ENCODE measurements at regions of chr20 and their contacts with region 1.

Region 1: DNA sequence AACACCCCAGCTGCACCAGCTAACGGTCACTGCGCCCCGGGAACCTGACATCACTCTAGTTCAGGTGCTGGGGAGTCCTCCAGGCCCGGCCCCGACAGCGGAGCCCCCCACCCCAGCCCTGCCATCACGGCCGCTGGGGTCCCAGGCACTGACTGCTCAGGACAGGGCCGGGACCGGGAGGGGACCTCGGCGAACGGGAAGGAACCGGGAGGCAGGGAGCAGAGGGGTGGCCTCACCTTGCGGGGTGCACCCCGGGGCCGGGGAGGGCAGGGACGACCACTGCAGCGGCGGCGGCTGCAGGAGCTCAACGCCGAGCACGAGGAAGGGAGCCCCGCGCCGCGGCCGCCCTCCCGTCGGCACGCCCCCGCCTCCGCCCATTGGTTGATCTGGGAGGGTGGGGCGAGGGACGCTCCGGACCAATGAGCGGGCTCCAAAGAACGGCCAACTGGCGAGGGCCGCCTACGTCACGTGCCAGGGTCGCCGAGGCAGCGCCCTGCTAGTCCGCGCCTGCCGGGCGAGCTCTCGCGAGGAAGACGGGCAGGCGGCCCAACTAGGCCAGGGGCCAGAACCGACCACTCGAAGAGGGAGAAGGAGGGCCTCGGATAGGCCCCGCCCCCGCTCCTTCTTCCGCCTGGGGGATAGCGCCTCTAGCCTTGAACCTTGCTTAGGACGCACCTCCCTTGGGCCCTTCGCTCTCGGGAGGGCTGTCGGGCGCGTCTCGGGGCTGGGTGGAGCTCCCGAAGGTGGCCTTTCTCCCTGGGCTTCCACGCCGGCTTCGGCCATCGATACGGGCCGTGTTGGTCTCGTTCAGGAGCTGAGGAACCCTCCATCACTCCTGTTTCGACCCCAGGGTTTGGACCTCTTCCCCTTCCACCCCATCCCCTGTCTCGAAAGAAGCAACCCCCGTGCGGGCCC is at the start of gene ADISSP:
- DNase-seq: peak; percentile 99
- ATAC-seq: peak; percentile 93
- H3K4me3 Mint-ChIP-seq: peak within 1 kb of the TSS; percentile 81
- H3K27ac Mint-ChIP-seq: peak within 1 kb of the TSS; percentile 70
- H3K4me1 Mint-ChIP-seq: peaks cover 25% of the 10 kb centered on the region
- H3K27me3 Mint-ChIP-seq: no peaks in the 10 kb centered on the region
- total RNA-seq, gene ADISSP: 46.5 to 57.3 TPM

Region 2: GRCh38 chr20:3156811-3157619 is 610.7 kb before region 1 on chr20:
- CTCF ChIA-PET with region 1: no interaction called
- POLR2A ChIA-PET with region 1: no interaction called
- intact Hi-C with region 1: loop called in 1 of 2 experiments (anchors 5 kb)
- DNase-seq: peak; percentile 41
- ATAC-seq: peak; percentile 89
- H3K4me3 Mint-ChIP-seq: peak overlapping the region; percentile 91
- H3K27ac Mint-ChIP-seq: peak overlapping the region; percentile 91
- H3K4me1 Mint-ChIP-seq: peaks cover 60% of the 10 kb centered on the region
- H3K27me3 Mint-ChIP-seq: no peaks in the 10 kb centered on the region

Region 3: DNA sequence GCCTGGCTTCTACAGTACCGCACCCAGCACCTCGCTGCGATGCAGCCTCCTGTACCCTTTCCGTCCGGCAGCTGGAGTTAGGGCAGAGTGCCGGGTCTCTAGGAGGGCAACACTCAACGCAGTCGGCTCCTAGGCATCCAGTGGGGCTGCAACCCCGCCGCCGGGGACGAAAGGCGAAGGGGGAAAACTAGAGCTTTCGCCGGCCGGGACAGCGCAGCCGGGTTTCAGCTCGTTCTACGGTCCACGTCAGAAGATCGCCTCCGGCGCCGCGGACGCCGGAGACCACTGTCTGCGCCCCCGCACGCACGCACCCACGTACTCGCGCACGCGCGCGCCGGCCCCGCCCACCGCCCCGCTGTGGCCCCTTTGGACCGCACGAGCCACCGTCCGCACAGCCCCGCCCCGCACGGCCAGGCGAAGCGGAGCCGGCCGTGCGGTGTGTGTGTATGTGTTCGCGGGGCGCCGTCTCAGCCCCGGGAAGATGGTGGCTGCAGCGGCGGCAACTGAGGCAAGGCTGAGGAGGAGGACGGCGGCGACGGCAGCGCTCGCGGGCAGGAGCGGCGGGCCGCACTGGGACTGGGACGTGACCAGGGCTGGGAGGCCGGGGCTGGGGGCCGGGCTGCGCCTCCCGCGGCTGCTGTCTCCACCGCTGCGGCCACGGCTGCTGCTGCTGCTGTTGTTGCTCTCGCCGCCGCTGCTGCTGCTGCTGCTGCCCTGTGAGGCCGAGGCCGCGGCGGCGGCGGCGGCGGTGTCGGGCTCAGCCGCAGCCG is 296.9 kb before region 1 on chr20 and contains the start of gene ATRN:
- CTCF ChIA-PET with region 1: no interaction called
- POLR2A ChIA-PET with region 1: no interaction called
- intact Hi-C with region 1: loop called in 1 of 2 experiments (anchors 2 kb)
- DNase-seq: peak; percentile 94
- ATAC-seq: peak; percentile 88
- H3K4me3 Mint-ChIP-seq: peak within 1 kb of the TSS; percentile 84
- H3K27ac Mint-ChIP-seq: peak within 1 kb of the TSS; percentile 66
- H3K4me1 Mint-ChIP-seq: peaks cover 26% of the 10 kb centered on the region
- H3K27me3 Mint-ChIP-seq: no peaks in the 10 kb centered on the region
- total RNA-seq, gene ATRN: 6.8 to 7.6 TPM

Region 4: DNA sequence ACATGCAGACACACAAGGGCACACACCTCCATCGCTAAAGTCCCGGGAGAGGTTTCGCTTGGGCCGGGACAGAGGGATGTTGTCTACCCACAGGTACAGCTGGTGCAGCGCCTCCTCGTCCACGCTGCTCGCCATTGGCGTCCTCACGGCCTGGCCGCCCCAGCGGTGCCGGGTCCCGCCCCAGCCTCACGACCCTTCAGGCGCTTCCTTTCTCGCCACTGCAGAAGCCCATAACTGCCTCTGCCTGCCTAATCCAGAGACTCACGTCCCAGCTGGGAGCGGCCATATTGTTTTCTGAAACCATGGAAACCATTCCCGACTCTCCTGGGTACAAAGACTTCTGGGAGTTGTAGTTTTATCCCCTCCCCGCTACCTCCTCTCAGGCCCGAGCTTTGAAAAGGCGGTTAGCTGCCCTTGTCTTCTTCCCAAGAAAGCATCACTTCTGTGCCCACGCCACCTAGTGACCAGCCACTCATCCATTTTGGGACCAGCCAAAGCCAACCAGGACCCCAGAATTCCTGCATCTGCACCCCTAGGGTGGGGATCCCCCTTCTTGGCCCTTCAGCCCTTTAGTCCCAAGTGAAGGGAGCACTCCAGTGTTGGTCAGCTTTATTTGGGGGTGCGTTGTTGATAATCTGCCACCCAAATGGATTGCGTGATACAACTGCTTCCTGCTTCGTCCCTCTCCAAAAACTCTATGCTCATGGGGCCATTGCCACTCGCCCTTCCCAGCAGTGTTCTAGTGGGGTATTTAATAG is 13.6 kb after region 1 on chr20 and contains the start of gene SPEF1:
- CTCF ChIA-PET with region 1: interaction called, 47 read pairs
- POLR2A ChIA-PET with region 1: interaction called, 15 read pairs
- intact Hi-C with region 1: loop called in 1 of 2 experiments (anchors 1 kb)
- DNase-seq: peak; percentile 68
- ATAC-seq: peak; percentile 65
- H3K4me3 Mint-ChIP-seq: peak within 1 kb of the TSS; percentile 42
- H3K27ac Mint-ChIP-seq: peak within 1 kb of the TSS; percentile 51
- H3K4me1 Mint-ChIP-seq: peaks cover 45% of the 10 kb centered on the region
- H3K27me3 Mint-ChIP-seq: peaks cover 15% of the 10 kb centered on the region
- total RNA-seq, gene SPEF1: 0.14 TPM in 1 of 2 experiments, not detected in the other

Region 5: DNA sequence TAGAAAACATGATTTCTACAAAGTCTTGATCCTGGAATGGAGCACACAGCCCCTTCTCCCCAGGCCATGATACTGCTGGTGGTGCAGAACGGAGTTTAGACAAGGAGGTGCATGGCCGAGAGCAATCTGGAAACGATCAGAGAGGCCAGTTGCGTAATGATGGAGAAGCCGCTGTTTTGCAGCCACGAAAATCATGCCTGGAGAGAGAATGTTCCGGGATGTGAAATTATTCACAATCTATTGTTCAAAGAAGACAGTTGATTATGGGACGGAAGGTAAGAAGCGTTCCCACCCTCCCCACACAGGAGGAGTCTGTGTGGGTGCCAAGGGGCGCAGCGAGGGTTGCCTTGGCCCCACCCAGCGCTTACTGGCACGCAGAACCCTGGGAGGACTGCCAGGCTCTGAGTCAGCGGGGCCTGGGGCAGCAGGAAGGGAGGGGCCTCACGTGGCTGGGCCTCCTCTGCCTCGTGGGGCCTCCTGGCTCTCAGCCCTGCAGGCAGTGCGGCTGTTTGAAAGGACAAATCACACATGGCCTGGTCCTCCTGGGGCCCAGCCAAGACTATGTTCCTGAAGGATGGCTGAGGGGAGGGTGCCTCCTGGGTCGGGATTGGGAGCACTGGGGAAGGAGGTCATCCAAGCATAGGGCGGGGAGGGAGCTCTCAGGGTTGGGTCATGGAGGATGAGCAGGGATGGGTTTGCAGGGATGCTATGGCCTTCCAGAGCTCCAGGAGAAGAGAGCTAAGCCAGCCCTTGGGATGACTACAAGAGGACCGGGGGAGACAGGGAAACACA is 44.0 kb after region 1 on chr20:
- CTCF ChIA-PET with region 1: interaction called, 4 read pairs
- POLR2A ChIA-PET with region 1: no interaction called
- intact Hi-C with region 1: loop called in 1 of 2 experiments (anchors 1 kb)
- DNase-seq: peak; percentile 97
- ATAC-seq: peak; percentile 92
- H3K4me3 Mint-ChIP-seq: peak overlapping the region; percentile 78
- H3K27ac Mint-ChIP-seq: peak overlapping the region; percentile 96
- H3K4me1 Mint-ChIP-seq: peaks cover 78% of the 10 kb centered on the region
- H3K27me3 Mint-ChIP-seq: no peaks in the 10 kb centered on the region

Region 6: DNA sequence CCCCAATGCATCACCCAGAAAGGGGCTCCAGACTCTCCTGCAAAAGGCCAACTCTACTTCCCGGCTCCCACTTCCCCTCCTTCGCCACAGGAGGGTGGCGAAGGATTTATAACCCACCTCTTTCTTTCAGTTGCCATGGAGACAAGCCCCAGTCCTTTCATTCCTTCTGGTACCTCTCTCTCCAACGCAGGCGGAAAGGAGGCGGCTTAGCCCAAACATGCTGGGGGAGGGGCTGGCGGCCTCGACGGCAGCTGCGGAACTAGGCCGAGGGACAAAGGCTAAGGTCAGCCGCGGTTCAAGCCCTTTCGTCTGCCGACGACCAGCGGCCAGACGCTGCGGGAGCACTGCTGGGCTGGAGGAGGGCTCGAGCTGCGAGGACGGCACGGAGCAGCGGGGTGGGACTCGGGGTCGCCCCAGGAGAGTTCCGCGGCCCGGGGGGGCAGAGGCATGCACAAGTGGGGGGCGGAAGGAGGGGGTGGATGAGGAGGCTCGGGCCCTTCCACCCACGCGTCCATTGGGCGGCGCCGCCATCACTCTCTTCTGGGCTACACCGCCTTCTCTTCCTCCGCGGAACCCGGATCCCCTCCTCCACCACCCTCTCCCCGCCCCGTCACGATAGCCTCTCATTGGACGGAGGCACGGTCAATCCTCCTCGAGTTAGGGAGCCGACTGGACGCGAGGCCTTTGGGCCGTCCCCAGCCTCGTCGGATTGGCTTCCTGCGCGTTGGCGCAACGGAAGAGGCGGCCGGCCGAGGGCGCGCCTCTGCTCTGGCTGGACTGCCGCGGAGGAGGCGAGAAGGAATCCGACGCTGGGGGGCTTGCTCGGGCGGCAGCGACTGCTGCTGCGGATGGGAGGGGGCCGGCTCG is 121.2 kb after region 1 on chr20 and contains the start of gene PANK2:
- CTCF ChIA-PET with region 1: interaction called, 3 read pairs
- POLR2A ChIA-PET with region 1: interaction called, 6 read pairs
- intact Hi-C with region 1: loop called in 1 of 2 experiments (anchors 1 kb)
- DNase-seq: peak; percentile 98
- ATAC-seq: peak; percentile 99
- H3K4me3 Mint-ChIP-seq: peak within 1 kb of the TSS; percentile 95
- H3K27ac Mint-ChIP-seq: peak within 1 kb of the TSS; percentile 93
- H3K4me1 Mint-ChIP-seq: peaks cover 46% of the 10 kb centered on the region
- H3K27me3 Mint-ChIP-seq: no peaks in the 10 kb centered on the region
- total RNA-seq, gene PANK2: 37.2 to 50.2 TPM

Region 7: DNA sequence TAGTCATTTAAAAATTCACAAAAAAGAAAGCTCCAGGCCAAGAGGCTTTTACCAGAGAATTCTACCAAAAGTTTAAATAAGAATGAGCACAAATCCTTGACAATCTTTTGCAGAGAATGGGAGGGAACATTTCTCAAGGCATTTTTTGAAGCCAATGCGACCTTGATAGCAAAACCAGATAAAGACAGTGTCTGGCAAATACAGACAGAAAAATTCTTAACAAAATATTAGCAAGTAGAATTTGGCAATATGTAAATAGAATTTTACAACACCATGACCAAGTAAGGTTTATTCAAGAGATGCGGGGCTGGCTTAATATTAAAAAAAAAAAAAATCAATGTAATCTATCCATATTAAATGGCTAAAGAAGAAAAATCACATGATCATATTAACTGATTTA is 206.1 kb after region 1 on chr20:
- CTCF ChIA-PET with region 1: no interaction called
- POLR2A ChIA-PET with region 1: no interaction called
- intact Hi-C with region 1: no loop called
- DNase-seq: no peak
- ATAC-seq: no peak
- H3K4me3 Mint-ChIP-seq: no peak overlapping the region
- H3K27ac Mint-ChIP-seq: no peak overlapping the region
- H3K4me1 Mint-ChIP-seq: peaks cover 10% of the 10 kb centered on the region
- H3K27me3 Mint-ChIP-seq: no peaks in the 10 kb centered on the region

Region 8: GRCh38 chr20:4082406-4083097 is 314.9 kb after region 1 on chr20:
- CTCF ChIA-PET with region 1: interaction called, 3 read pairs
- POLR2A ChIA-PET with region 1: no interaction called
- intact Hi-C with region 1: loop called in 1 of 2 experiments (anchors 1 kb)
- DNase-seq: peak; percentile 69
- ATAC-seq: peak; percentile 78
- H3K4me3 Mint-ChIP-seq: peak overlapping the region; percentile 9
- H3K27ac Mint-ChIP-seq: peak overlapping the region; percentile 87
- H3K4me1 Mint-ChIP-seq: peaks cover 41% of the 10 kb centered on the region
- H3K27me3 Mint-ChIP-seq: peaks cover 5% of the 10 kb centered on the region